Calu3 (cell line): ENCODE measurements at regions of chr11 and their contacts with region 1.

Region 1: DNA sequence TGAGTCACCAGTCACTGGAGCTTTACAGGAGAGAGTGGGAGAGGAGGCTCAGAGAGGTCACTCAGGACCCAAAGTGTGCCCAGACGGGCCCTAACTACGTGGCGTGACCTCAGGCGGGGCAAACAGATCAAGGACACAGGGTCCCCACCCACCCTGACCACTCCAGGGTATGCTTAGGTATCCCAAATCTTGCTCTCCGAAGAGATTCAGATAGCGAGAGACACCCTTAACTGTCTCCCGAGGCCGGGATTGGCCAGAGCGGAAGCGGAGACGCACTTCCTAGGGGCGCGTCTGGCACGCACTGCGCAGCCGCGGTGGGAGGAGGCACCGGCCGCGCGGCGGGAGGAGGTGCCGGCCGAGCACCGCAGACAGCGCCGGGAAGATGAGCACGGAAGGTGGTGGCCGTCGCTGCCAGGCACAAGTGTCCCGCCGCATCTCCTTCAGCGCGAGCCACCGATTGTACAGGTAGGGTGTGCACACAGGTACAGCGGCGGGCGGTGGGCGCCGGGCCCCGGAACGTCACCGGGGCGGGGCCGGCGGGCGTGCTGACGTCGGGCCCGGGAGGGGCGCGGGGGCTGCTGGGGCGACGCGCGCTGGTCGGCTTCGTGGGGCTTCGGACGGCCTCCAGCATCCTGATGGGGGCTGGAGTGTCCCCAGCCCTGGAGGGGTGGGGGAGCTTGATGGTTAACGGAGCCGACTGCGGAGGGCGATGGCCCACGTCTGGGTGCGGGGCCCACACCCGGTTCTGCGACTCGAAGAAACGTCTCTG is at the start of gene PTS:
- DNase-seq: peak; percentile 75
- H3K4me3 Mint-ChIP-seq: peak within 1 kb of the TSS; percentile 81
- H3K27ac Mint-ChIP-seq: peak within 1 kb of the TSS; percentile 90
- H3K4me1 Mint-ChIP-seq: peaks cover 8% of the 10 kb centered on the region
- H3K27me3 Mint-ChIP-seq: no peaks in the 10 kb centered on the region
- CTCF ChIP-seq: no peak
- total RNA-seq, gene PTS: 28.8 and 29.3 TPM in 2 replicates

Region 2: DNA sequence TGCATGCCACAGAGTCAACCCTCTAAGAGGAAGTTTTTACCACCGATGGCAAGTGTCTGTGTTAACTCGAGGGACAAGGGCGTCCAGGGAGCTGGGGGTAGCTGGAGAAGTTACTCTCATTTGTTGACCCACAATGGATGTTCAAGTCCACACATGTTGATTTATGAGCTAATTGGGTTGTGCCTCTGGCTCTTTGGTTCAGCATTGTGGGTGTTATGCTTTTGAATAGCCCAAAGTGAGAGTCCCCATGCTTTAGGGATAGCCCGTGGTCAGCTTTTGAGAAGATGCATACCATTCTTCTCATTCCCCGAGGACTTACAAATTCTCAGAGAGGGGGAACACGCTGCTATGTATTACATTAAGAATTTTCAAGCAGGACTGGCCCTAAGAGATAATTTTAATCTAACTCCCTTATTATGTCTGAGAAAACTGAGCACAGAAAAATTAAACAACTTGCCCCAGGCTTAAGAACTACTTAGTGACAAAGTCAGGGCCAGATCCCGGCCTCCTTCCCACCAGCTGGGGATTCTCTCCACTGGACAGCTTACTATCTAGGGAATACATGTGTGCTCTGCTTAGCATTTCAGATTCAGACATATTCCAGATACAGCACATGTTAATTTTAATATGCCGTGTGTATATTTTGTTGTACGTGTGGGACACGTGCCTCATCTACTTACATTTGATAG is 39.6 kb after region 1 on chr11:
- CTCF ChIA-PET with region 1: no interaction called
- intact Hi-C with region 1: loop called (anchors 5 kb)
- DNase-seq: no peak
- H3K4me3 Mint-ChIP-seq: no peak overlapping the region
- H3K27ac Mint-ChIP-seq: no peak overlapping the region
- H3K4me1 Mint-ChIP-seq: peaks cover 28% of the 10 kb centered on the region
- H3K27me3 Mint-ChIP-seq: no peaks in the 10 kb centered on the region
- CTCF ChIP-seq: no peak

Region 3: DNA sequence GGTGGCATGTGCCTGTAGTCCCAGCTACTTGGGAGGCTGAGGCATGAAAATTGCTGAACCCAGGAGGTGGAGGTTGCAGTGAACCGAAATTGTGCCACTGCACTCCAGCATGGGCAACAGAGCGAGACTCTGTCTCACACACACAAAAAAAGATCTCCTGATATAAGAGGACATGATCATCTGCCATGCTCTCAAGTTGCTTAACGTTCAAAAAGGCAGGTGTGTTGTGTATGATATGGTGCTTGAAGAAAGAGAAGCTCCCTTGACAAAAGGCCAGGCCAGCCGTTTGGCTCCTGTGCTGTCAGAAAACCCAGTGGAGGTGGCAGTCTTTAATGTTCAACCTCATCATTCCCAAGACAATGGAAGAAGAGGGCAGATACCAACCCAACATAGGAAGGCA is 151.7 kb after region 1 on chr11:
- CTCF ChIA-PET with region 1: no interaction called
- intact Hi-C with region 1: no loop called
- DNase-seq: no peak
- H3K4me3 Mint-ChIP-seq: no peak overlapping the region
- H3K27ac Mint-ChIP-seq: no peak overlapping the region
- H3K4me1 Mint-ChIP-seq: no peaks in the 10 kb centered on the region
- H3K27me3 Mint-ChIP-seq: no peaks in the 10 kb centered on the region
- CTCF ChIP-seq: no peak